ENCODE measurements at regions of chr22 and their contacts with region 1.

Region 1: GRCh38 chr22:25447686-25448434 is 116.6 kb upstream of the GRK3 start:
- DNase-seq: peak; percentile 94
- ATAC-seq: peak; percentile 92
- H3K4me3 Mint-ChIP-seq: peak overlapping the region; percentile 91
- H3K27ac Mint-ChIP-seq: peak overlapping the region; percentile 91
- H3K4me1 Mint-ChIP-seq: peaks cover 44% of the 10 kb centered on the region
- H3K27me3 Mint-ChIP-seq: no peaks in the 10 kb centered on the region

Region 2: GRCh38 chr22:25420925-25421904 is 26.6 kb before region 1 on chr22:
- CTCF ChIA-PET with region 1: interaction called, 10 read pairs
- POLR2A ChIA-PET with region 1: no interaction called
- DNase-seq: no peak
- ATAC-seq: peak; percentile 36
- H3K4me3 Mint-ChIP-seq: peak overlapping the region; percentile 60
- H3K27ac Mint-ChIP-seq: no peak overlapping the region
- H3K4me1 Mint-ChIP-seq: peaks cover 25% of the 10 kb centered on the region
- H3K27me3 Mint-ChIP-seq: peaks cover 64% of the 10 kb centered on the region

Measured in activated CD8-positive, alpha-beta T cell treated with anti-CD3 and anti-CD28 coated beads, Interleukin-2, amount 10 ng/mL, durations not matched to agents 7 days and 5 days (primary cell).